ENCODE measurements at regions of chr4 and their contacts with region 1.

Region 1: DNA sequence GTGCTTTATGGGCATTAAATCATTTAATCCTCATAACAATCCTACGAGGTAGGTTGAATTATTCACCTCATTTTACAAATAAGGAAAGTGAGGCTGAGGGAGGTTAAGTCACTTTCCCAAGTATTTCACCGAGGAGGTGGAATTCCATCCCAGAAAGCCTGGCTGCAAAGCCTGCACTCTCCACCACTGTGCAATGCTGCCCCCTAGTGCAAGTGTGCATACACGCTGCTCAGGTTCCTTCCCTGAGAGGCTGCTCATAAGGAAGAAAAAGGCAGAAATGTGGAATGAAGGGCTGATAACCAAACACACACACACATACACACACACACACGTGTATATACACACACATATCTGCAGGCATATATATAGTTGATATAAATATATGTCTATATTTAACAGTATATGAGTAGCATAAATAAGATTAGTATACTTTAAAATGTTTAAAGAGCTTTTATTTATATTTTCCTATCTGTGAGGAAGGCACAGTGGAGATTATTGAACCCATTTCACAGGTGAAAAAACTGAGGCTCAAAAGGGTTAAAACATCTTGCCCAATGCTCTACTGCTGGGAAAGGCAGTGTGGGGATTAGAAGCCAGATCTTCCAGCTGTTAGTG is 714.5 kb upstream of the TENM3 start:
- DNase-seq: peak; percentile 90
- ATAC-seq: peak; percentile 93
- H3K4me3 Mint-ChIP-seq: no peak overlapping the region
- H3K27ac Mint-ChIP-seq: no peak overlapping the region
- H3K4me1 Mint-ChIP-seq: peaks cover 29% of the 10 kb centered on the region
- H3K27me3 Mint-ChIP-seq: no peaks in the 10 kb centered on the region
- CTCF ChIP-seq: peak; percentile 84

Region 2: GRCh38 chr4:181143250-181143854 is 385.3 kb before region 1 on chr4:
- CTCF ChIA-PET with region 1: interaction called, 23 read pairs
- POLR2A ChIA-PET with region 1: no interaction called
- DNase-seq: peak; percentile 80
- ATAC-seq: peak; percentile 67
- H3K4me3 Mint-ChIP-seq: no peak overlapping the region
- H3K27ac Mint-ChIP-seq: no peak overlapping the region
- H3K4me1 Mint-ChIP-seq: 0 out of 2 replicates have a peak, but pooled peaks cover 6% of the 10 kb centered on the region
- H3K27me3 Mint-ChIP-seq: peaks cover 4% of the 10 kb centered on the region; the same call in 1 of the 2 replicates
- CTCF ChIP-seq: peak; percentile 89

Region 3: GRCh38 chr4:181261279-181261678 is 267.4 kb before region 1 on chr4:
- CTCF ChIA-PET with region 1: interaction called, 18 read pairs
- POLR2A ChIA-PET with region 1: no interaction called
- DNase-seq: no peak
- ATAC-seq: peak; percentile 75
- H3K4me3 Mint-ChIP-seq: no peak overlapping the region
- H3K27ac Mint-ChIP-seq: no peak overlapping the region
- H3K4me1 Mint-ChIP-seq: peaks cover 40% of the 10 kb centered on the region
- H3K27me3 Mint-ChIP-seq: no peaks in the 10 kb centered on the region
- CTCF ChIP-seq: no peak

Region 4: DNA sequence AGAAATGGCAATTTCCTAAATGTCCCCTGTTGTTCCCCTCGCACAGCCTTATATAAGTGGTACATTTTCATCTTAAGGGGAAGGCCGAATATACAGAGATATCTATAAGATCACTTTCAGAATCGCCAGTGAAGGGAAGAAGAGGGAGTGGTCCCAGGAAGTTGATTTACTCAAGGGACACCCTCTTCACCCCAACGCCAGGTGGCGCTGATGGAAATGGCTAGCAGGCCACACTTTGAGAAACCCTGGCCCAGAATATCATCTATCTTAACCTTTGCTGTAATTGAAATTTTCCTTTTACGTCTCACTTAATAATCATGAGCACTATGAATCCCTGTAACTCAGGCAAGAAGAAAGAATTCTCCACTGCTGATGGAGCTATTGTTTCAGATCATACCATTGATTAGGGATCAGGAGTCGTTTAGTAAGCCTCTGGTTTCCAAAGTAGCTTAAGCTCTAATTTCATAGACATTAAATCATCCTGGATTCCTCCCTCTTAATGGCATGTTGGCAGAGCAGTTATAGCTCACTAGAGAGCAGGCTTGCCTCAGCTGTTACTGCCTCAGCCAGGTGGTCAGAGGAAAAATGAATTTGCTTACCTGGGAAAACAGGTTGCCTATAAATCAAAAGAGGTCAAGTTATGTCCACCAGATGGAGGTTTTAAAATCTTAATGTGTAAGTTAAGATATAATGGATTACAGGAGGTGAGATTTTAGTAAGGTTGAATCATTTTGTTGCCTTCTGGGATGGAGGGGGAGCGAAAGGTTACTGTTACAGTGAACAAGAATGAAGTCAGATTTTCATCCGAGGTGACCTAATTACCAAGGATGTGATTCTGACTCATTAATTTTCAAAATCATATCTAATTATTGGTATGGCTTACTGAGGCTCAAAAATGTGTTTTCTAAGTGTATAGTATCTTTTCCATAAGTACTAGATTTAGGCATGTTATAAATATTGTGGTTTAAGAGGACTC is 226.7 kb before region 1 on chr4:
- CTCF ChIA-PET with region 1: interaction called, 19 read pairs
- POLR2A ChIA-PET with region 1: no interaction called
- DNase-seq: peak; percentile 75
- ATAC-seq: peak; percentile 92
- H3K4me3 Mint-ChIP-seq: no peak overlapping the region
- H3K27ac Mint-ChIP-seq: no peak overlapping the region
- H3K4me1 Mint-ChIP-seq: peaks cover 10% of the 10 kb centered on the region
- H3K27me3 Mint-ChIP-seq: no peaks in the 10 kb centered on the region
- CTCF ChIP-seq: peak; percentile 80

Region 5: GRCh38 chr4:181582595-181582994 is 53.9 kb after region 1 on chr4:
- CTCF ChIA-PET with region 1: no interaction called
- POLR2A ChIA-PET with region 1: no interaction called
- DNase-seq: peak; percentile 22
- ATAC-seq: no peak
- H3K4me3 Mint-ChIP-seq: no peak overlapping the region
- H3K27ac Mint-ChIP-seq: no peak overlapping the region
- H3K4me1 Mint-ChIP-seq: no peaks in the 10 kb centered on the region
- H3K27me3 Mint-ChIP-seq: no peaks in the 10 kb centered on the region
- CTCF ChIP-seq: 0 out of 2 replicates have a peak, but pooled peaks have one; percentile 18

Measured in WTC11 (cell line).